H1 (cell line): ENCODE measurements at regions of chr11 and their contacts with region 1.

Region 1: DNA sequence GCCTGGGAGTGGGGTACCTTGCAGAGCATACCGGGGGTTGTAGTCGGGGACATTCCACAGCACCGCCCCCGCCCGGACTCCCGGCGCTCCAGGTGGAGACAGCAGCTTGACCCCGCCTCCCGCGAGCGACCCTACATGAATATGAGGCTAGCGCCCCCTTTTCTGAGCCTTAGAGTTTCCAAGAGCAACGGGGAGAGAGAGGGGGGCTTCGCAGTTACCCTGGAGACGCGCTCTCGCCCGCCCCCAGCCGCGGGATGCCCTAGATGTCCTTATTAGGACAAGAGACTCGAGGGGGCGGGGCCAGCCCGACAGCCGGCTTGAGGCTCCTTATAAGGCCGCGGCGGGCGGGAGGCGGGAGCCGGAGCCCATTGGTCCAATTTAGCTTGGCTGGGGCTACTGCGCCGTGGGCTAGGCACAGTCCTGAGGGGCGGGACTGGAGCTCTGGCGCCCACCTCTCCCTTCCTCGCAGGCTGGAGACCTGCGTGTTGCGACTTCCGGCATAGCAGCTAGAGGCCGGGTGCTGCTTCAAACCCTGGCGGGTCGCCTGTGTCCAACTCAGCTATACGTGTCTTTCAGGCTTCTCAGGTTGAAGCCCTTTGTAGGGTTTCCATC is 927 bp upstream of the MUS81 start:
- DNase-seq: peak; percentile 99
- H3K4me3 ChIP-seq: peak overlapping the region; percentile 75 to 95 (median 86)
- H3K27ac ChIP-seq: peak overlapping the region; percentile 96
- H3K4me1 ChIP-seq: peaks cover 0 to 15% (median 6%) of the 10 kb centered on the region in 4 experiments; a peak in 5 of 7 replicates
- H3K27me3 ChIP-seq: no peaks in the 10 kb centered on the region
- CTCF ChIP-seq: peak in 2 of 3 experiments; percentile 28 to 48; a peak in 3 of 4 replicates
- EP300 ChIP-seq: peak in 1 of 2 experiments; percentile 12; a peak in 1 of 3 replicates
- POLR2A ChIP-seq: peak in 1 of 2 experiments; percentile 96; a peak in 2 of 3 replicates
- RAD21 ChIP-seq: peak in 1 of 2 experiments; percentile 6; a peak in 1 of 4 replicates

Region 2: DNA sequence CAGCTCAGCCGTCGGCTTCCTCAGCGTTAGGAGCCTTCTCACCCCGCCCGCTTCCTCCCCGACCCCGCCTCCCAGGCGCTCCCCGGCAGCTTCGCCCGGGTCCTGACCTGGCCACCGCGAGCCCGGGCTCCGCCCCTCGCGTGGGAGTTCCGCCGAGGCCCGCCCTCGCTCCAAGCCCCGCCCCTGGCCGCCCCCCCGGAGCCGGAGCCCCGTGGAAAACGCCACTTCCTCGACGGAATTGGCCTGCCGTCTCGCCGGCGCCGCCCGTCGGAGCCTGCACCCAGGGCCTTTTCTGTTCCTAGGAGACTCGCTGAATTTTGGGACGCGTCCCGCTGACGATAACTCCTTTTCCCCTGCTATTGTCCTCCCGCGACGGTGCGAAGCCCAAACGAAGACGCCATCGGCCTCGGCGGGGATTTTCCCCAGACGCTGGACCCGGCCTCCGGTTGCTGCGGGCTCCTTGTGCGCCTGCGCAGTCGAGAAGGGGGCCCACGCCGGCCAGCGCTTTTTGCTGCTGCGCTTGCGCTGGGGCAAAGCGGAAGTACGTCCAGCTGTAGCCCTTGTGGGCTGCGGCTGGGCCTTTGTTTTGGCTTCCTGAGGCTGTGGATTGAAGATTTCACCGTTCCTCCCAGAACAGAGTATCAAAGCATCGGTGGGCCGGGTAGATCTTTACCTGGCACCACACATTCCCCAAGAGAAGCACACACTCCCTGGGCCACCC is 206.6 kb before region 1 on chr11:
- CTCF ChIA-PET with region 1: interaction called, 3 read pairs
- POLR2A ChIA-PET with region 1: interaction called, 11 read pairs
- DNase-seq: peak in 1 of 2 experiments; percentile 93
- H3K4me3 ChIP-seq: peak overlapping the region; percentile 45 to 72 (median 60)
- H3K27ac ChIP-seq: peak overlapping the region; percentile 77
- H3K4me1 ChIP-seq: peaks cover 0 to 12% (median 8%) of the 10 kb centered on the region in 4 experiments; a peak in 5 of 7 replicates
- H3K27me3 ChIP-seq: peaks cover 0 to 4% (median 2%) of the 10 kb centered on the region in 4 experiments; a peak in 1 of 7 replicates
- CTCF ChIP-seq: no peak
- EP300 ChIP-seq: no peak
- POLR2A ChIP-seq: peak in 1 of 2 experiments; percentile 65; a peak in 2 of 3 replicates
- RAD21 ChIP-seq: no peak

Region 3: GRCh38 chr11:65720237-65720934 is 138.9 kb before region 1 on chr11 and contains the start of gene RNASEH2C:
- CTCF ChIA-PET with region 1: interaction called, 9 read pairs
- POLR2A ChIA-PET with region 1: interaction called, 17 read pairs
- DNase-seq: peak; percentile 44 to 90
- H3K4me3 ChIP-seq: peak within 1 kb of the TSS; percentile 83 to 91 (median 85)
- H3K27ac ChIP-seq: peak within 1 kb of the TSS; percentile 90
- H3K4me1 ChIP-seq: peaks cover 0 to 6% (median 3%) of the 10 kb centered on the region in 4 experiments; a peak in 2 of 7 replicates
- H3K27me3 ChIP-seq: no peaks in the 10 kb centered on the region
- CTCF ChIP-seq: no peak
- EP300 ChIP-seq: no peak
- POLR2A ChIP-seq: peak; percentile 80 to 81
- RAD21 ChIP-seq: no peak
- total RNA-seq, gene RNASEH2C: 37.9 and 40.2 TPM in 2 replicates

Region 4: DNA sequence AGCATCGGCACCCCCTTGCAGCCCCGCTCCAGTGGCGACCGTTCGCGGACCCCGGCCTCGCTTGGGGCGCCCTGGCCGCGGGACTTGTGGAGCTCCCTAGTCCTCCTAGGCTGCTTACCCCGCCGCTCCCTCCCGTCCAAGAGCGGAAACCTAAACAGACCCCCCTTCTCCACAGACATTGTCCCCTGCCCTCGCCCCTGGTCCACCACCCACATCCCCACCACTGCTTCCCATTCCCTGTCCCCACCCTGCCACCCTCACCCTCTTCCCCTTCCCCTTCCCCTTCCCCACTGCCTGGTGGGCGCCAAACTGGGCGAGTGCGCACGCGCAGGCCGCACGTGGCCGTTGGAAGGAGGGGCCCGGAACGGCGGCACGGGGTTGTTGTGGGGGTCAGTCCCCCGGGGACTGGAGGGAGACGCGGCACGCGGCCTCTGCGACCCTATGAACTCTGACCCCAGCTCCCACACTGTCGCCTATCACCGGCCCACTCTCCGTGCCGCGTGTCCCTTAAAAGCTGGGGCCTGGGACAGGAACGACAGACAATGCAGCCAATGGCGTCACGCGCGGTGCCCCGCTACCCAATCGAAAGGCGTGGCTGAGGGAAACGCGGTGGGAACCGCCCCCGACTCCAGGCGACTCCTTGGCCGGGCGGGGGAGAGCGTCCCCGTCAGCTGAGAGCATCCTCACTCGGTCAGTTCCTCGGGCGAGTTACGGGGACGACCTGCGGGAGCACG is 25.8 kb before region 1 on chr11 and contains the start of gene SNX32:
- CTCF ChIA-PET with region 1: interaction called, 9 read pairs
- POLR2A ChIA-PET with region 1: interaction called, 1,071 read pairs
- DNase-seq: peak in 1 of 2 experiments; percentile 97
- H3K4me3 ChIP-seq: peak within 1 kb of the TSS; percentile 68 to 72 (median 70)
- H3K27ac ChIP-seq: peak within 1 kb of the TSS; percentile 70; the same call in 1 of the 2 replicates
- H3K4me1 ChIP-seq: peaks cover 0 to 8% (median 6%) of the 10 kb centered on the region in 4 experiments; a peak in 6 of 7 replicates
- H3K27me3 ChIP-seq: peaks cover 0 to 9% (median 6%) of the 10 kb centered on the region in 4 experiments; a peak in 4 of 7 replicates
- CTCF ChIP-seq: no peak
- EP300 ChIP-seq: no peak
- POLR2A ChIP-seq: peak in 1 of 2 experiments; percentile 41; a peak in 1 of 3 replicates
- RAD21 ChIP-seq: no peak
- total RNA-seq, gene SNX32: 1.1 and 2.2 TPM in 2 replicates

Region 5: GRCh38 chr11:65879617-65880016 is 20.3 kb after region 1 on chr11 and contains the start of gene CTSW:
- CTCF ChIA-PET with region 1: interaction called, 283 read pairs
- POLR2A ChIA-PET with region 1: interaction called, 1,071 read pairs
- DNase-seq: no peak
- H3K4me3 ChIP-seq: no peak within 1 kb of the TSS
- H3K27ac ChIP-seq: no peak within 1 kb of the TSS
- H3K4me1 ChIP-seq: peaks cover 0 to 2% (median 0%) of the 10 kb centered on the region in 4 experiments; a peak in 1 of 7 replicates
- H3K27me3 ChIP-seq: peaks cover 0 to 3% (median 0%) of the 10 kb centered on the region in 4 experiments; a peak in 1 of 7 replicates
- CTCF ChIP-seq: no peak
- EP300 ChIP-seq: no peak
- POLR2A ChIP-seq: no peak
- RAD21 ChIP-seq: no peak
- total RNA-seq, gene CTSW: not detected in 2 replicates

Region 6: GRCh38 chr11:65919146-65920033 is 60.1 kb after region 1 on chr11 and contains the start of gene DRAP1:
- CTCF ChIA-PET with region 1: interaction called, 6 read pairs
- POLR2A ChIA-PET with region 1: interaction called, 11 read pairs
- DNase-seq: peak; percentile 85 to 95
- H3K4me3 ChIP-seq: peak within 1 kb of the TSS; percentile 91 to 98 (median 94)
- H3K27ac ChIP-seq: peak within 1 kb of the TSS; percentile 80
- H3K4me1 ChIP-seq: peaks cover 0 to 22% (median 13%) of the 10 kb centered on the region in 4 experiments; a peak in 4 of 7 replicates
- H3K27me3 ChIP-seq: no peaks in the 10 kb centered on the region
- CTCF ChIP-seq: no peak
- EP300 ChIP-seq: peak in 1 of 2 experiments; percentile 71; a peak in 1 of 3 replicates
- POLR2A ChIP-seq: peak; percentile 46 to 58
- RAD21 ChIP-seq: peak in 1 of 2 experiments; percentile 29; a peak in 2 of 4 replicates
- total RNA-seq, gene DRAP1: 98.7 and 108 TPM in 2 replicates

Region 7: DNA sequence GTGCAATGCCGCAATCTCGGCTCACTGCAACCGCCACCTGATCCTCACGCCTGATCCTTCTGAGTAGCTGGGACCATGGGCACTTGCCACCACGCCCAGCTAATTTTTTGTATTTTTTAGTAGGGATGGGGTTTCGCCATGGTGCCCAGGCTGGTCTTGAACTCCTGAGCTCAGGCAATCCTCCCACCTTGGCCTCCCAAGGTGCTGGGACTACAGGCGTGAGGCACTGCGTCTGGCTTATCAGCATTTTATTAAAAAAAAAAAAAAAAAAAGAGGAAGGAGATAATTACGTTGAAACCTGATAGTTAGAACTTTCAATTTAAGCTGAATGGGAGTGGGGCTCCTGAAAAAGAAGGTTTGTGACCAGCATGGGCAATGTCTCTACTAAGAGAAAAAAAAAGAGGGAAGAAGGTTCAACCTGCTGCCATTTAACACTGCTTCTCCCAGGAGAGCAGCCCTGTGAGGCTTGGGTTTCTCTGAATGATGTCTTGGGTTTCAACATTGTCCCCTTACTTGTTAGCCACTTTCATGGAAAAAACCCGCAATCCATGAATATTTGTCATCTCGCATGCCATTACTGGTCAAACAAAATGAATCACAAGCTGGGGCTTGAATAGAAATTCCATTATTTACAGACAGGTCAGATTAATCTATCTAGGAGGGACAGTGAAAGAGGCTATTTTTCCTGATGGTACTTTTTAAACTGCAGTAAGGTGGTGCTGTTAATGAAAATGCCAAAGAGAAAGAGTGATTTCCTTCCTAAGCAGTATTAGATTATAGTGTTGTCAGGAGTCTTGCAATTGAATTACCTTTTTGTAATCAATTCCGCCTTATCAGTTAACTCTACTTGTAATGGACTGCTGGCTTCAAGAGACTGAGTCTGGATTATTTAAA is 283.3 kb after region 1 on chr11:
- CTCF ChIA-PET with region 1: no interaction called
- POLR2A ChIA-PET with region 1: no interaction called
- DNase-seq: no peak
- H3K4me3 ChIP-seq: no peak overlapping the region
- H3K27ac ChIP-seq: no peak overlapping the region
- H3K4me1 ChIP-seq: no peaks in the 10 kb centered on the region
- H3K27me3 ChIP-seq: no peaks in the 10 kb centered on the region
- CTCF ChIP-seq: no peak
- EP300 ChIP-seq: no peak
- POLR2A ChIP-seq: no peak
- RAD21 ChIP-seq: no peak